ENCODE measurements at regions of chr17 and their contacts with region 1.

Region 1: GRCh38 chr17:38893607-38894006 is 23.7 kb downstream of the LASP1 start:
- DNase-seq: peak; percentile 75
- ATAC-seq: peak; percentile 45
- H3K4me3 Mint-ChIP-seq: no peak overlapping the region
- H3K27ac Mint-ChIP-seq: peak overlapping the region; percentile 82
- H3K4me1 Mint-ChIP-seq: peaks cover 88% of the 10 kb centered on the region
- H3K27me3 Mint-ChIP-seq: no peaks in the 10 kb centered on the region
- CTCF ChIP-seq: no peak

Region 2: DNA sequence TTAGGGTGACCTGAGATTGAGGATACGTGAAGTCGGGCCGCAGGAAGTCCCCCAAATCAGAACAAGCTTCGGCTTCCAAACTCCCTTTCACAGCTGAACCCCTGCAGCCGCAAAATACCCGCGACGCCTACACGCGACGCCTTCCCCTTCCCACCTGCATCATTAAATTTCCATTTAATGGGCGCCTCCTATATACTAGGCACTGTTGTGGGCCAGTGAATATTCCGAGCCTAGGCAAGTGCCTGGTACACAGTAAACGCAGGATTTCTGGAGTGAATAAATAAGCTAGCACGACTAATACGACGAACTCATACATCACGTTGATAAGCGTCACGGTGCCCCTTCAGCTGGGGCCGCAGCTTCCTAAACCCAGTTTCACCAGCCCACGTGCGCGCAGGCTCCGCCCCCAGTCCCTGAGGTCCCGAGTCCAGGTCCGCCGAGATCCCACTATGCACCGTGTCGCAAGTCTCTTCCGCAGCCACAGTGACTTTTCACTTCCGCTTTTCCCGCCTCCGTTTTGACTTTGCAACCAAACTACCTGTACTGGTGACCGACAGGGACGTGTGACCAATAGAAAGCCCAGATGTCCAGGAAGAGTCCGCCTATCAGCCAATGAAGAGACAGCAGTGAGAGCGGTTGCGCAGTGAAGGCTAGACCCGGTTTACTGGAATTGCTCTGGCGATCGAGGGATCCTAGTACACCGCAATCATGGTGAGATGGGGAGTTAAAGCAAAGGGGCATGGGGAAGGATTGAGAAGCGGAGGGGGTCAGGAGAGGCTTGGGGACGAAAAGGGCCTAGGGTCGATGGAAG is 141.3 kb before region 1 on chr17 and contains the start of gene PSMB3:
- CTCF ChIA-PET with region 1: no interaction called
- POLR2A ChIA-PET with region 1: no interaction called
- intact Hi-C with region 1: no loop called
- DNase-seq: peak; percentile 100
- ATAC-seq: peak; percentile 89
- H3K4me3 Mint-ChIP-seq: peak within 1 kb of the TSS; percentile 91
- H3K27ac Mint-ChIP-seq: peak within 1 kb of the TSS; percentile 96
- H3K4me1 Mint-ChIP-seq: peaks cover 39% of the 10 kb centered on the region
- H3K27me3 Mint-ChIP-seq: peaks cover 26% of the 10 kb centered on the region
- CTCF ChIP-seq: no peak
- total RNA-seq, gene PSMB3: 275 to 279 TPM

Region 3: GRCh38 chr17:38922538-38923297 is 29.1 kb after region 1 on chr17:
- CTCF ChIA-PET with region 1: interaction called, 8 read pairs
- POLR2A ChIA-PET with region 1: interaction called, 8 read pairs
- intact Hi-C with region 1: loop called (anchors 5 kb)
- DNase-seq: no peak
- ATAC-seq: no peak
- H3K4me3 Mint-ChIP-seq: no peak overlapping the region
- H3K27ac Mint-ChIP-seq: peak overlapping the region; percentile 62
- H3K4me1 Mint-ChIP-seq: peaks cover 53% of the 10 kb centered on the region
- H3K27me3 Mint-ChIP-seq: no peaks in the 10 kb centered on the region
- CTCF ChIP-seq: no peak

Measured in activated CD8-positive, alpha-beta T cell treated with anti-CD3 and anti-CD28 coated beads for 36 hours (primary cell).